ENCODE measurements at regions of chr16 and their contacts with region 1.

Region 1: DNA sequence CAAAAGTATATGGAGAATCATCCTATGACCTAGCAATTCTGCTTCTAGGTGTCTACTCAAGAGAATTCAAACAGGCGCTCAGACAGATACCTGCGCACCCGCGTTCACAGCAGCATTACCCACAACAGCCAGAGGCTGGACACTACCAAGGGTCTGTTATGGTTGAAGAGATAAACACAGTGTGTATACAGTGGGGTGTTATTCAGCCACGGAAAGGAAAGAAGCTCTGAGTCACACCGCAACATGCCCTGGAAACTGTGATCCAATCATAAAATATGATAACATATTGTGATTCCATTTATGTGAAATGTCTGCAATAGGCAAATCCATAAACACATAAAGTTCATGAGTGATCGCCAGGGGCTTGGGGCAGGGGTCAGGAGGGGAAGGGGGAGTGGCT is 18.0 kb upstream of the JPH3 start:
- DNase-seq: no peak
- ATAC-seq: no peak
- H3K4me3 ChIP-seq: no peak overlapping the region
- H3K27ac ChIP-seq: no peak overlapping the region
- H3K4me1 ChIP-seq: peaks cover 0 to 32% (median 18%) of the 10 kb centered on the region in 12 donors
- H3K27me3 ChIP-seq: peaks cover 0 to 42% (median 9%) of the 10 kb centered on the region in 9 donors
- CTCF ChIP-seq: no peak
- POLR2A ChIP-seq: no peak

Region 2: DNA sequence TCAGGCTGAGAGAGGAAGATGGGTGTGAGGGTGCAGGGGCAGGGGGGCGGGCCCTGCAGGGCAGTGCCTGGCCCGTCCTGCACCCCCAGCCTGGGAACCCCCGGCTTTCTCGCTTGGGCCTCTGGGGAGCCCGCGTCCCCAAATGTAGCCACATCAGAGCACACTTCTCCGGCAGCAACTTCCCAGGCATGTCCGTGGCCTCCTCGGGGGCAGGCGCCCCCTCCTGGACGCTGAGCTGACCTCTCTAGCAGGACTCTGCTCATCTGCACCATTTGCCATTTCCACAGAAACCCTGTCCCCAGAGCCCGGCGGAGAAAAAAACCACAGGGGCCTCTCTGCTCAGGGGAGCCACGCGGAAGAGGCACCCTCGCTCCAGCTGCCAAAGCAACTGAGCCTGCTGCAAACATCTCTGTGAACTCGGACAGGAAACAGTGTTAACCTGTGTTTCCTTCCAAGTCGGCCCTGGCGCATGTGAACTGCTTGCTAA is 118.1 kb after region 1 on chr16:
- intact Hi-C with region 1: loop called in 1 of 10 experiments (anchors 5 kb)
- DNase-seq: no peak
- ATAC-seq: peak in 1 of 4 donors; percentile 36
- H3K4me3 ChIP-seq: no peak overlapping the region
- H3K27ac ChIP-seq: no peak overlapping the region
- H3K4me1 ChIP-seq: peaks cover 0 to 15% (median 0%) of the 10 kb centered on the region in 12 donors
- H3K27me3 ChIP-seq: no peaks in the 10 kb centered on the region
- CTCF ChIP-seq: peak in 10 of 12 donors; percentile 12 to 59 (median 37)
- POLR2A ChIP-seq: no peak

Region 3: DNA sequence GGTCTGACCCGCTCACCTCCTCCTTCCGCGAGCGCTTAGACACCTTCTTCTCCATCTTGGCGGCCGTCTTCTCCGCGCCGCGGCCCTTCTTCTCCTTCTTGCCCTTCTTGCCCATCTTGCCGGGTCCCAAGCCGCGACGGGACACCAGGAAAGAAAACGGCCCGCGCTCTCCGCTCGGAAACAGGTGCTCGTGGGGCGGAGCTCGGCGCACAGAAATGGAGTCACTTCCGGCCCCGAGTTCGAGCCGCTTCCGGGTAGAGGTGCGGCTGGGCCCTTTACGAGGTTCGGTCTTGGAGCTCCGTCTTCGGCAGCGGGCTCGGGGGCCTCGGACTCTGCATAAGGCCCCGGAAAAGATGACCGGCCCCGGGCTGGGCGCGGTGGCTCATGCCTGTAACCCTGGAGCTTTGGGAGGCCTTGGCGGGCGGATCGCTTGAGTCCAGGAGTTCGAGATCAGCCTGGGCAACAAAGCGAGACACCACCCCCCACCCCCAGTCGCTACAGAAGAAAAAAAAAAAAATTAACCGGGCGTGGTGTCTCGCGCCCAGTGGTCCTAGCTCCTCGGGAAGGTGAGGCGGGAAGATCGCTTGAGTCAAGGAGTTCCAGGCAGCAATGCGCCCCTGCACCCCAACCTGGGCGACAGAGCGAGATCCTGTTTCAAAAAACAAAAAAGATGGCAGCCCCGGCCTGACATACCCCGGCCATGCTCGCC is 181.7 kb after region 1 on chr16 and contains the start of gene KLHDC4:
- intact Hi-C with region 1: loop called in 8 of 10 experiments (anchors 1 to 5 kb)
- DNase-seq: peak; percentile 89 to 93 (median 91)
- ATAC-seq: peak; percentile 81 to 96 (median 94)
- H3K4me3 ChIP-seq: peak within 1 kb of the TSS; percentile 81 to 97 (median 93)
- H3K27ac ChIP-seq: peak within 1 kb of the TSS; percentile 57 to 93 (median 84)
- H3K4me1 ChIP-seq: peaks cover 3 to 26% (median 9%) of the 10 kb centered on the region in 12 donors
- H3K27me3 ChIP-seq: peaks cover 0 to 4% (median 0%) of the 10 kb centered on the region in 9 donors
- CTCF ChIP-seq: no peak
- POLR2A ChIP-seq: peak in 1 of 2 donors; percentile 72
- total RNA-seq, gene KLHDC4: 6.8 to 19.2 (median 13.7) TPM

Measured in heart left ventricle (tissue), 16 donors.